K562 (cell line): ENCODE measurements at regions of chr5 and their contacts with region 1.

Region 1: DNA sequence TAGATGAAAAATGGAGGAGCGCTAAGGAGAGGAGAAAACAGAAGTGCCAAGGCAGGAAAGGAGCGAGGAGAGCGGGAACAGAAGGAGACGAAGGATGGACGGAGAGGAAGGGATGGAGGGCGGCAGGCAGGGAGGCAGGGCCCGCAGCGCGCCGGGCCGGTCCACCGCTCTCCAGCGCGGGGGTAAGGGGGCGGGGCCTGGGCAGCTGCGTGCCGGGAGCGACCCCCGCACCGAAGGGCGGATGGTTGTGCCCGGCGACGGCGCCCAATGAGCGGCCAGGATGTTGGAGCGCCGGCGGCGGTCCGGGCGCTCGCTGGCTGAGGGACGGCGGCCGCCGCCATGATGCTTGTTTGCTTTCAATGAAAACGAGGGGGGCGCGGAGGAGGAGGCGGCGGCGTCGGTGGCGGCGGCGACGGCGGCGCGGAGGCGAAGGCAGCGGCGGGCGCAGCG is at the start of gene CNOT6:
- DNase-seq: peak; percentile 96 to 98 (median 97)
- ATAC-seq: peak; percentile 91
- H3K4me3 ChIP-seq: peak within 1 kb of the TSS; percentile 99
- H3K27ac ChIP-seq: peak within 1 kb of the TSS; percentile 96
- H3K4me1 ChIP-seq: peaks cover 21 to 40% of the 10 kb centered on the region in 2 experiments
- H3K27me3 ChIP-seq: no peaks in the 10 kb centered on the region
- CTCF ChIP-seq: no peak
- EP300 ChIP-seq: no peak
- POLR2A ChIP-seq: peak; percentile 83
- RAD21 ChIP-seq: no peak; a peak in 1 of 4 replicates
- polyA plus RNA-seq, gene CNOT6: 4.9 to 7.9 TPM

Region 2: GRCh38 chr5:180259260-180259681 is 234.8 kb before region 1 on chr5:
- CTCF ChIA-PET with region 1: no interaction called
- POLR2A ChIA-PET with region 1: no interaction called
- in situ Hi-C with region 1: no loop called
- intact Hi-C with region 1: no loop called
- DNase-seq: no peak
- ATAC-seq: no peak
- H3K4me3 ChIP-seq: no peak overlapping the region
- H3K27ac ChIP-seq: no peak overlapping the region
- H3K4me1 ChIP-seq: no peaks in the 10 kb centered on the region
- H3K27me3 ChIP-seq: no peaks in the 10 kb centered on the region
- CTCF ChIP-seq: no peak
- EP300 ChIP-seq: no peak
- POLR2A ChIP-seq: no peak
- RAD21 ChIP-seq: no peak

Region 3: DNA sequence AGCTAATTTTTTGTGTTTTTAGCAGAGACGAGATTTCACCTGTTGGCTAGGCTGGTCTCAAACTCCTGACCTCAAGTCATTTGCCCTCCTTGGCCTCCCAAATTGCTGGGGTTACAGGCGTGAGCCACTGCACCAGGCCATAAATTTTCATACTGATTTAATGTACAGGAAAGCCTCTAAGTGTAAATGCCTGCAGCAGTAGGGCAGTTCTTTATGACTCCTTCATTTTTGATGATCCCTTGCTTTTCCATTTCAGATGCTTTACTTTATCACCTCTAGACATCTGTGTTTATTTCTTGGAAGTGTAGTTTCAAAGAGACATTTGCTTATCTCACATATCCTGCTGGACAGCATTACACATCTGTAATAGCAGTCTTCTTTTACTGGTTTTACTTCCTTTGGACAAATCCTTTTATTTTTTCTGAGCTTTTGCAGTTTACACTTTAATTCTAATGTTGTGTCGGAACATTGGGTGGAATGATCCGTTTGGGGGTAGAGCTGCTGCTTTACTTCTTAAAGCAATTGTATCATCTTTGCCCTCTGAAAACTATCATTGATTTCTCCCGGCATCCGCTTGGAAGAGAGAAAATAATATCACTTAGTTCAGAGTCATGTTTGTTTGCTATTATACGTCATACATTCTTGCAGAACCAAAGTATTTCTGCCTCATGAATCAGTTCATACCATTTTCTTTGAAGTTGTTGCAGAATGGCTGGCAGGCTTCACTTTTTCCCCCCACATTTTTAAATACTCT is 61.3 kb after region 1 on chr5:
- CTCF ChIA-PET with region 1: no interaction called
- POLR2A ChIA-PET with region 1: interaction called, 6 read pairs
- in situ Hi-C with region 1: no loop called
- intact Hi-C with region 1: loop called (anchors 5 kb)
- DNase-seq: peak; percentile 66 to 81 (median 72)
- ATAC-seq: peak; percentile 79
- H3K4me3 ChIP-seq: no peak overlapping the region
- H3K27ac ChIP-seq: peak overlapping the region; percentile 72
- H3K4me1 ChIP-seq: peaks cover 33 to 58% of the 10 kb centered on the region in 2 experiments; a peak in 4 of 5 replicates
- H3K27me3 ChIP-seq: no peaks in the 10 kb centered on the region
- CTCF ChIP-seq: no peak
- EP300 ChIP-seq: peak; percentile 99
- POLR2A ChIP-seq: no peak
- RAD21 ChIP-seq: no peak